HepG2 (cell line): ENCODE measurements at regions of chr22 and their contacts with region 1.

Region 1: GRCh38 chr22:24592851-24593558 is at the start of gene LRRC75B:
- DNase-seq: peak; percentile 85
- ATAC-seq: peak; percentile 89
- H3K4me3 ChIP-seq: peak within 1 kb of the TSS; percentile 79 to 88 (median 84)
- H3K27ac ChIP-seq: peak within 1 kb of the TSS; percentile 97
- H3K4me1 ChIP-seq: peaks cover 74% of the 10 kb centered on the region
- H3K27me3 ChIP-seq: no peaks in the 10 kb centered on the region; a peak in 1 of 5 replicates
- CTCF ChIP-seq: peak; percentile 19
- EP300 ChIP-seq: peak; percentile 19 to 31; a peak in 1 of 4 replicates
- POLR2A ChIP-seq: peak; percentile 86 to 94
- RAD21 ChIP-seq: peak; percentile 49
- total RNA-seq, gene LRRC75B: 5.7 and 11.8 TPM in 2 replicates

Region 2: DNA sequence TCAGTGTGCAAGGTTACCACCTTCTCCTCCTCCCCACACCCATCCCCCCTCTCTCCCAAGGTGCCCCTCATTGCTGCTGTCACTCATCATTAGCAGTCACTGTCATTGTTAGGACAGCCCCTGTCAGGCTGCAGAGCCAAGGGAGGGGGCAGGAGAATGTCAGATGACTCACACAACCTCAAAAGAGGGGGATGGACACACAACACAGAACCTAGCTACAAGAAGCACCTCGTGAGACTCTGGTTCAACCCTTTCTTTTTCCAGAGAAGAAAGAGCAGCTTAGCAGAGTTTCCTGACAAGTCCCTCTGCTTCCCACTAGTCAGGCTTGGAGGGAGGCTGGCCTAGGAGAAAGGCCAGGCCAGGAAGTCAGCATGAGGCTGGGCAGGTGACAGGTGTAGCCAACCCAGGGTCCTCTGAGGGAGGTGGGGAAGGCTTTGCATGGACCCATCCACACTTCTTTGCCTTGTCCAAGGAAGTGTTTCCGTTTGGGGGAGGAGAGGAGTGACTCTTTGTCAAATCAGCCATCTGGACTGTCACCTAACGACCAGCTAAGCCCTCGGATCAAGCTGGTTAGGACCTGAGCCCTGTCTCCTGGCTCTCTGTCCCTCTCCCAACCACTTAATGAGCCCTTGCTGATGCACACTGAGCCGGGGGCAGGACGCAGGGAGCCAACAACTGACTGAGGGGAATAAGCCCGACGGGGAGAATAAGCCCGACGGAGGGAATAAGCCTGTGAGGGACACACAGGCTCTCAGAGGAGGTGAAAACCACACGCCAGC is 147.3 kb before region 1 on chr22:
- CTCF ChIA-PET with region 1: no interaction called
- POLR2A ChIA-PET with region 1: no interaction called
- in situ Hi-C with region 1: no loop called
- intact Hi-C with region 1: no loop called
- DNase-seq: peak; percentile 27
- ATAC-seq: peak; percentile 56
- H3K4me3 ChIP-seq: peak overlapping the region in 1 of 3 experiments; percentile 22; a peak in 1 of 6 replicates
- H3K27ac ChIP-seq: no peak overlapping the region
- H3K4me1 ChIP-seq: peaks cover 31% of the 10 kb centered on the region
- H3K27me3 ChIP-seq: peaks cover 0 to 3% of the 10 kb centered on the region in 2 experiments; a peak in 2 of 5 replicates
- CTCF ChIP-seq: no peak
- EP300 ChIP-seq: no peak
- POLR2A ChIP-seq: no peak
- RAD21 ChIP-seq: no peak

Region 3: DNA sequence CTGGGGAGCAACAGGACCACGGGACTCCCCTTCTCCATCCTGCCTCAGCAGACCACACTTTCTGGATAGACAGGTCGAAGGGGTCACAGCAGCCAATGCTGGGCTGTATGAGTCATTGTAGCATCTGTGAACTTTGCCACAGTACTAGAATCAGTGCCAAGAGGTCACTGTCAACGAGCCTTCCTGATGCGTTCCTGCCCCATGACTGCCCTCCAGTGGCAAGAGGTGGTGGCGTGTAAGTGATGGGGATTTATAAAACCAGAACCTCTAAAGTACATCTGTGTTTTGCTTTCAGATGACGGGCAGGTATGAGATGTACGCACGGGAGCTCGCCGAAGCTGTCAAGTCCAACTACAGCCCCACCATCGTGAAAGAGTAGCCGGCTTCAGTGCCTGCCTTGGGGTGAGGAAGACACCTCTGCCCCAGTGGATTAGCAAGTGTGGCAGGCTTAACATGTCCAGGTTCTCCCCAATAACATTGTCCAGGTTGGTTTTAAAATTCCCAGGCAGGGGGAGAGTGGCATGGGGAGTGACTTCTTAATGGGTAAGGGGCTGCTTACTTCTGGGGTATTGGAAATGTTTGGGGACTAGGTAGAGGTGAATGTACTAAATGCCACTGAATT is 67.5 kb before region 1 on chr22:
- CTCF ChIA-PET with region 1: no interaction called
- POLR2A ChIA-PET with region 1: no interaction called
- in situ Hi-C with region 1: no loop called
- intact Hi-C with region 1: no loop called
- DNase-seq: peak; percentile 92
- ATAC-seq: peak; percentile 88
- H3K4me3 ChIP-seq: no peak overlapping the region
- H3K27ac ChIP-seq: no peak overlapping the region
- H3K4me1 ChIP-seq: peaks cover 54% of the 10 kb centered on the region
- H3K27me3 ChIP-seq: no peaks in the 10 kb centered on the region
- CTCF ChIP-seq: peak; percentile 99
- EP300 ChIP-seq: peak in 1 of 2 experiments; percentile 64; a peak in 1 of 4 replicates
- POLR2A ChIP-seq: no peak
- RAD21 ChIP-seq: peak; percentile 96

Region 4: DNA sequence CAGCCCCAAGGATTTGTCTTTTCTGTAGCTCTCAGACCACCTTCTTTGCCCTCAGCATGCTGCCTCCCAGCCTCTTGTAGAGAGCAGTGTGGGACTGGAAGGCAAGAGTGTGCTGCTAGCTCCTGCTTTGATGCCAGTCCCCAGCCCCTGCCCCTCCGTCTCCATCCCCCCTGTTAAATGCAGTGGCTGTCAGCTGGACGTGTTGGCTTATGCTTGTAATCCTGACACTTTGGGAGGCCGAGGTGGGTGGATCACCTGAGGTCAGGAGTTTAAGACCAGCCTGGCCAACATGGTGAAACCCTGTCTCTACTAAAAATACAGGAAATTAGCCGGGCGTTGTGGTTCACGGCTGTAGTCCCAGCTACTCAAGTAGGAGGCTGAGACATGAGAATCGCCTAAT is 21.7 kb before region 1 on chr22:
- CTCF ChIA-PET with region 1: no interaction called
- POLR2A ChIA-PET with region 1: interaction called, 66 read pairs
- in situ Hi-C with region 1: no loop called
- intact Hi-C with region 1: no loop called
- DNase-seq: no peak
- ATAC-seq: peak; percentile 21; the same call in 2 of the 3 replicates
- H3K4me3 ChIP-seq: no peak overlapping the region
- H3K27ac ChIP-seq: peak overlapping the region; percentile 78
- H3K4me1 ChIP-seq: peaks cover 64% of the 10 kb centered on the region
- H3K27me3 ChIP-seq: no peaks in the 10 kb centered on the region
- CTCF ChIP-seq: no peak
- EP300 ChIP-seq: no peak
- POLR2A ChIP-seq: no peak
- RAD21 ChIP-seq: no peak

Region 5: DNA sequence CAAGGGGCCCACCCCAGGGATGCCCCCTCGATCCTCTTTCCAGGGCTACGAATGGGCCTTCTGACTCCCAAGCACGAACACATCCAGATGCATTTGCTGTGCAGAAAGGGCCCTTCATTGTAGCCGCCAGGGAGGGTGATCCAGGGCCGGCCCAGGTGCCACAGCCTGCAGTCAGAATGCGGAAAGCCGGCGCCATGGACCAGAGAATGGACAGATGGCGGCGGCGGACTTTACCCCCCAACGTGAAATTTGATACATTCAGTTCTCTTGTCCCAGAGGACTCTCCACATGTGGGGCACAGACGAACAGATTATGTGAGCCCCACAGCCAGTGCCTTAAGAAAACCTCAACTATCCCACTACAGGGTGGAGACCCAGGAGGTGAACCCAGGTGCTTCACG is 446.7 kb after region 1 on chr22:
- CTCF ChIA-PET with region 1: no interaction called
- POLR2A ChIA-PET with region 1: no interaction called
- in situ Hi-C with region 1: no loop called
- intact Hi-C with region 1: no loop called
- DNase-seq: no peak
- ATAC-seq: no peak
- H3K4me3 ChIP-seq: no peak overlapping the region
- H3K27ac ChIP-seq: no peak overlapping the region
- H3K4me1 ChIP-seq: no peaks in the 10 kb centered on the region
- H3K27me3 ChIP-seq: no peaks in the 10 kb centered on the region
- CTCF ChIP-seq: no peak
- EP300 ChIP-seq: no peak
- POLR2A ChIP-seq: no peak
- RAD21 ChIP-seq: no peak